ENCODE measurements at regions of chr9 and their contacts with region 1.

Region 1: GRCh38 chr9:89318123-89319014 is at the start of gene SECISBP2:
- DNase-seq: peak; percentile 89 to 98
- H3K4me3 ChIP-seq: peak within 1 kb of the TSS; percentile 74 to 89
- H3K27ac ChIP-seq: peak within 1 kb of the TSS; percentile 98 to 100
- H3K4me1 ChIP-seq: peaks cover 10 to 27% of the 10 kb centered on the region in 2 donors
- H3K27me3 ChIP-seq: no peaks in the 10 kb centered on the region
- CTCF ChIP-seq: peak in 2 of 3 experiments; percentile 60 to 69
- total RNA-seq, gene SECISBP2: 27.8 TPM

Region 2: DNA sequence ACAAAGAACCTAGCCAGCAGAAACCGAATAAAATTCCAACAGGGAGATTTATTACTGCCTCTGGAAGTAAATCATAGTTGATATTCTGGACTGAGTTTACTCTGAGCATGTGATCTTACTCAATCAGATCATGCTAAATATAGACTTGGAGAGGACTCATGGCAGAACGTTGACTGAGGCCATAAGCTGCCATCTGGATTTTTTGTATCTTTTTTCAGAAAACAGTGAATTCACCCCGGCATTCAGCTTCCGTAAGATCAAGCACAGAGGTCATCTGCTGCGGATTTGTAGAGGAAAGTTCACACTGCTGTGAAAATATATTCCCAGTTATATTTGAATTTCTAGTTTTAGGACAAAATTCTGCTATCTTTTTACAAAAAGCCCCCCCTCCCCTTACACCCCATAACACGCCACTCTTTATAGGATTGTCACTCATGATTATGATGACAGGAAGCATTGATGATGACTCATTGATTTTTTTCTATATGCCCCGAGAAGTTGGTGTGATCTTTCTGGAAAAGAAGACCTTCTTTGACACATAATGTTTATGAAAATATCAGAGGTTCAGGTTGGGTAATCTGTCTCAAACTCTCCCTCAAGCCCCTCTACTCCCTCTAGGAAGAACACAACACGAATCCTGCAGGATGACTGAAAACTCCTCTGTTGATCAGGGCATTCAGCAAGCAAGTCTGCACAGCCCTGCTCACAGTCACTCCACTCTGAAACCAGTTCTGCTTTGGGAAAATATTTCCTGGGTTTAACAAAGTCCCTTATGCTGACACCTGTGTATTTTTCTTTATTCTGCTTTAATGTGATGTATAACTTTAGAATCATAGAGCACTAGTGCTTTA is 712.6 kb before region 1 on chr9:
- intact Hi-C with region 1: loop called (anchors 10 kb)
- DNase-seq: no peak
- H3K4me3 ChIP-seq: peak overlapping the region in 1 of 2 donors; percentile 0
- H3K27ac ChIP-seq: peak overlapping the region; percentile 74 to 81
- H3K4me1 ChIP-seq: peaks cover 0 to 21% of the 10 kb centered on the region in 2 donors
- H3K27me3 ChIP-seq: no peaks in the 10 kb centered on the region
- CTCF ChIP-seq: no peak

Region 3: GRCh38 chr9:88991066-88992034 is 327.0 kb before region 1 on chr9 and contains the start of gene S1PR3:
- intact Hi-C with region 1: loop called (anchors 1 kb)
- DNase-seq: peak in 1 of 2 donors; percentile 86
- H3K4me3 ChIP-seq: peak within 1 kb of the TSS; percentile 77 to 89
- H3K27ac ChIP-seq: peak within 1 kb of the TSS; percentile 80 to 90
- H3K4me1 ChIP-seq: peaks cover 5 to 10% of the 10 kb centered on the region in 2 donors
- H3K27me3 ChIP-seq: no peaks in the 10 kb centered on the region
- CTCF ChIP-seq: peak in 1 of 3 experiments; percentile 5
- total RNA-seq, gene S1PR3: 59.3 TPM

Region 4: GRCh38 chr9:89497978-89498851 is 179.8 kb after region 1 on chr9 and contains the start of gene SEMA4D:
- intact Hi-C with region 1: loop called (anchors 5 kb)
- DNase-seq: peak in 1 of 2 donors; percentile 74
- H3K4me3 ChIP-seq: peak within 1 kb of the TSS; percentile 83 to 91
- H3K27ac ChIP-seq: peak within 1 kb of the TSS in 1 of 2 donors; percentile 24
- H3K4me1 ChIP-seq: peaks cover 0 to 6% of the 10 kb centered on the region in 2 donors
- H3K27me3 ChIP-seq: no peaks in the 10 kb centered on the region
- CTCF ChIP-seq: no peak
- total RNA-seq, gene SEMA4D: 13.5 TPM

Region 5: DNA sequence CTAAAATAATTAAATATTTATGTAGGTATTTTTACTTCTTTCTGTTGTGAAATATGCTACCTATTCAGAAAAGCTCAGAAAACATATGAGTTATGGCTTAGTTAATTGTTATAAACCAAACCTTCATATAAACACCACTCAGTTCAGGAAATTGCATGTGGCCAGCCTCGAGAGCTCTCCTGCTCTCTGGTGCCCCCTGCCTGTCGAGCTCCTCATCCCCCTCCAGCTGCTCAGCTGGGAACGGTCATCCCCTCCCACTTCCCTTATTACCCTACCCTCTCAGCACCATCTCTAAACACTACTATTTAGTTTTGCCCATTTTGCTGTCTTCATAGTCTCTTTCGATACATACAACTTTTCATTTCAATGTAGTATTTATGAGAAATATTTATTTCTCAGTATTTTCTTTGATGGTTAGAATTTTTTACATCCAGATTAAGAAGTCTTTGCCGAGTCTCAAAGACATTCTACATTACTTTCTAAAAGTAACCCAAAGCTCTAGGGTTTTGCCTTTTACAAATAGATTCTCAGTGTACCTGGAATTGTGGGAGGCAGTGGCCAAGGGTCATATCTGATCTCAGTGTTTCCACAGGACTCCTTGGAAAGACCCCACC is 230.8 kb after region 1 on chr9:
- intact Hi-C with region 1: loop called (anchors 5 kb)
- DNase-seq: peak in 1 of 2 donors; percentile 79
- H3K4me3 ChIP-seq: no peak overlapping the region
- H3K27ac ChIP-seq: no peak overlapping the region
- H3K4me1 ChIP-seq: no peaks in the 10 kb centered on the region
- H3K27me3 ChIP-seq: no peaks in the 10 kb centered on the region
- CTCF ChIP-seq: peak; percentile 49 to 72 (median 64)

Measured in ascending aorta (tissue), 2 donors.